CD8-positive, alpha-beta T cell (primary cell): ENCODE measurements at regions of chr18 and their contacts with region 1.

Region 1: GRCh38 chr18:13375302-13376255 is 157.0 kb downstream of the LDLRAD4 start:
- DNase-seq: peak in 8 of 9 experiments; percentile 54 to 82 (median 68)
- ATAC-seq: peak; percentile 69
- H3K4me3 ChIP-seq: peak overlapping the region in 1 of 2 experiments; percentile 2
- H3K4me3 Mint-ChIP-seq: peak overlapping the region; percentile 64
- H3K27ac ChIP-seq: peak overlapping the region in 1 of 2 experiments; percentile 14
- H3K27ac Mint-ChIP-seq: peak overlapping the region; percentile 91
- H3K4me1 ChIP-seq: peaks cover 76% of the 10 kb centered on the region
- H3K4me1 Mint-ChIP-seq: peaks cover 71% of the 10 kb centered on the region
- H3K27me3 ChIP-seq: no peaks in the 10 kb centered on the region
- H3K27me3 Mint-ChIP-seq: no peaks in the 10 kb centered on the region
- CTCF ChIP-seq: no peak

Region 2: DNA sequence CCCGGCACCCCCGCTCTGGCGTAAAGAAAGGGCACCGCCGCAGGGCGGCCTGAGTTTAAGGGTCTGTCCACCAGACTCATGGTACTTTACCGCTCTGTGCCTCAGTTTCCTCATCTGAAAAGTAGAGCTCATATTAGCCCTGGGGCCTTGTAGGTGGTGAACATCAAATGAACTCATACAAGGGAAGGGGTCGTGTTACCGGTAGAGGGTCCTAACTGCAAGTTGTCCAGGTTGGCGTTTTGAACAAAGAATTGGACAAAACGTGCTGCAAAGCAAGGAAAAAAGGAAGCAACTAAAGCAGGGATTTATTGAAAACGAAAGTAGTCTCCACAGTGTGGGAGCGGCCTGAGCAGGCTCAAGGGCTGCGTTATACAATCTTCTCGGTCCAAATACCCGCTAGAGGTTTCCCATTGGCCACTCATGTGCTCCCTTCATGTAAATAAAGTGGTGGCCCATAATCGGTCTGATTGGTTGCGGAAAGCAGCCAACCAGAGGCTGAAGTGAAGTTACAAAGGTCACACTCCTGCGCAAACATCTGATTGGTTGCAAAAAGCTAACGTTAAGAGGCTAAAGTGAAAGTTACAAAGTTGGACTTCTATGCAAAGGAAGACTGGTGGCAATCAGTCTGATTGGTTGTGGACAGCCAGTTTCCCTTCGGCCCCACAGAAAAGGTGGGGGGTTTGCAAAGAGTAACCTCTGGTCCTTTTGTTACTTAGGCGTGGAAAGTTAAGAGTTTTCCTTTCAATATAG is 237.7 kb before region 1 on chr18:
- CTCF ChIA-PET with region 1: no interaction called
- POLR2A ChIA-PET with region 1: no interaction called
- intact Hi-C with region 1: loop called in 1 of 2 experiments (anchors 5 kb)
- DNase-seq: peak; percentile 28 to 90 (median 61)
- ATAC-seq: peak; percentile 73
- H3K4me3 ChIP-seq: peak overlapping the region; percentile 84 to 98
- H3K4me3 Mint-ChIP-seq: peak overlapping the region; percentile 94
- H3K27ac ChIP-seq: peak overlapping the region; percentile 87 to 90
- H3K27ac Mint-ChIP-seq: peak overlapping the region; percentile 96
- H3K4me1 ChIP-seq: peaks cover 20% of the 10 kb centered on the region
- H3K4me1 Mint-ChIP-seq: peaks cover 28% of the 10 kb centered on the region
- H3K27me3 ChIP-seq: no peaks in the 10 kb centered on the region
- H3K27me3 Mint-ChIP-seq: no peaks in the 10 kb centered on the region
- CTCF ChIP-seq: no peak

Region 3: GRCh38 chr18:13279181-13280069 is 96.2 kb before region 1 on chr18:
- CTCF ChIA-PET with region 1: no interaction called
- POLR2A ChIA-PET with region 1: no interaction called
- intact Hi-C with region 1: loop called in 1 of 2 experiments (anchors 5 kb)
- DNase-seq: peak in 5 of 9 experiments; percentile 22 to 59 (median 47)
- ATAC-seq: peak; percentile 61
- H3K4me3 ChIP-seq: peak overlapping the region; percentile 8 to 12
- H3K4me3 Mint-ChIP-seq: peak overlapping the region; percentile 73
- H3K27ac ChIP-seq: no peak overlapping the region
- H3K27ac Mint-ChIP-seq: peak overlapping the region; percentile 78
- H3K4me1 ChIP-seq: peaks cover 52% of the 10 kb centered on the region
- H3K4me1 Mint-ChIP-seq: peaks cover 78% of the 10 kb centered on the region
- H3K27me3 ChIP-seq: no peaks in the 10 kb centered on the region
- H3K27me3 Mint-ChIP-seq: no peaks in the 10 kb centered on the region
- CTCF ChIP-seq: no peak

Region 4: GRCh38 chr18:13353084-13353823 is 22.3 kb before region 1 on chr18:
- CTCF ChIA-PET with region 1: no interaction called
- POLR2A ChIA-PET with region 1: no interaction called
- intact Hi-C with region 1: loop called in 1 of 2 experiments (anchors 2 kb)
- DNase-seq: peak in 2 of 9 experiments; percentile 45 to 53
- ATAC-seq: peak; percentile 55
- H3K4me3 ChIP-seq: no peak overlapping the region
- H3K4me3 Mint-ChIP-seq: peak overlapping the region; percentile 15
- H3K27ac ChIP-seq: peak overlapping the region in 1 of 2 experiments; percentile 36
- H3K27ac Mint-ChIP-seq: peak overlapping the region; percentile 92
- H3K4me1 ChIP-seq: peaks cover 12% of the 10 kb centered on the region
- H3K4me1 Mint-ChIP-seq: peaks cover 27% of the 10 kb centered on the region
- H3K27me3 ChIP-seq: no peaks in the 10 kb centered on the region
- H3K27me3 Mint-ChIP-seq: no peaks in the 10 kb centered on the region
- CTCF ChIP-seq: no peak

Region 5: DNA sequence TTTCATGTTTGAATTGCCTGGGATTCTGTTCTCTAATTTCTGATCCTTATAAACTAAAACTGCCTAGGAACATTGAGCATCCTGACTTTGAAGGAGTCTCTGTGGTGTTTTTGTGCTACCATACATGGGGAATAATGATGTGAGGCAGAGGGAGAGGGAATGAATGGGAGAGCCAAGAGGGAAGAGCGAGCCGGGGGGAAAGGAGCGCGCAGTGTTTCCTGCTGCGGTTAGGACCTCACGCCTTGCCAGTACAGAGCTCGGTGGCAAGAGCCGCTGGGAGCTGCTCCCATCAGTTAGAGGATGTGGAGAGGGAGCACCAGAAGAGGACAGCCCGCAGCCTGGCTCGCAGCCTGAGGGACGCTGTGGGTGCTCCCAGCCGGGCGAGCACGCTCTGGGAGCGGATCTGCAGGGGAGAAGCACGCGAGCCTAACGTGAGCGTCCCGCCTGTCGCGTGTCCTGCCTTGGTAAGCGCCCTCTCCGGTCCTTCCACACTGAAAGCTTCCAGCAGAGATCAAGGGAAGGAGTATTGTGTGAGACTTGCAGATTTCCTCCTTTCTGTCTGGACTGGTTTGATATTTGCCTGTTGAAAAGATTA is 236.1 kb after region 1 on chr18:
- CTCF ChIA-PET with region 1: interaction called, 3 read pairs
- POLR2A ChIA-PET with region 1: no interaction called
- intact Hi-C with region 1: loop called (anchors 5 kb)
- DNase-seq: peak in 2 of 9 experiments; percentile 26 to 36
- ATAC-seq: no peak
- H3K4me3 ChIP-seq: peak overlapping the region; percentile 36 to 55
- H3K4me3 Mint-ChIP-seq: peak overlapping the region; percentile 82
- H3K27ac ChIP-seq: peak overlapping the region; percentile 33 to 53
- H3K27ac Mint-ChIP-seq: peak overlapping the region; percentile 98
- H3K4me1 ChIP-seq: peaks cover 72% of the 10 kb centered on the region
- H3K4me1 Mint-ChIP-seq: peaks cover 83% of the 10 kb centered on the region
- H3K27me3 ChIP-seq: no peaks in the 10 kb centered on the region
- H3K27me3 Mint-ChIP-seq: no peaks in the 10 kb centered on the region
- CTCF ChIP-seq: no peak